Activated CD8-positive, alpha-beta T cell treated with anti-CD3 and anti-CD28 coated beads for 36 hours (primary cell): ENCODE measurements at regions of chr17 and their contacts with region 1.

Region 1: GRCh38 chr17:7862692-7863437 is 5.1 kb downstream of the CYB5D1 start:
- DNase-seq: peak; percentile 70
- ATAC-seq: no peak
- H3K4me3 Mint-ChIP-seq: no peak overlapping the region
- H3K27ac Mint-ChIP-seq: no peak overlapping the region
- H3K4me1 Mint-ChIP-seq: peaks cover 33% of the 10 kb centered on the region
- H3K27me3 Mint-ChIP-seq: no peaks in the 10 kb centered on the region
- CTCF ChIP-seq: peak; percentile 96

Region 2: DNA sequence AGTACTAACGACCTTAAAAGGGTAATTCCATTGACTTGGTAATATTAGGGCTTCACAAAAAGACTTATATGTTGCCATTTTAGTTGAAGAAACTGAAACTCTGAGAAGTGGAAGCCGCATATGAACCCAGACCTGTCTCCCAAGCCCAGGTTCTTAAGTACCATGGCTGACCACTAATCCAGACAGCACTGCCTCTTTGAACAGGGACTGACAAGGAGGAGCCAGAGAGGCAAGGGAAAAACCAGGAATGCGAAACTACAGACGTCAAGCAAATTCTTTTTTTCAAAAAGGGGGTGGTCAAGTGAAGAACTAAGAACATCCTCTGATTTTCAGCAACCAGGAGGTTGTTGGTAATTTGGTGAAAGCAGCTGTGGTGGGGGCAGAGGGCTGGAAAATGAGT is 10.2 kb after region 1 on chr17:
- CTCF ChIA-PET with region 1: interaction called, 42 read pairs
- POLR2A ChIA-PET with region 1: interaction called, 8 read pairs
- intact Hi-C with region 1: no loop called
- DNase-seq: no peak
- ATAC-seq: no peak
- H3K4me3 Mint-ChIP-seq: no peak overlapping the region
- H3K27ac Mint-ChIP-seq: no peak overlapping the region
- H3K4me1 Mint-ChIP-seq: peaks cover 14% of the 10 kb centered on the region
- H3K27me3 Mint-ChIP-seq: no peaks in the 10 kb centered on the region
- CTCF ChIP-seq: no peak

Region 3: GRCh38 chr17:7897773-7898172 is 34.9 kb after region 1 on chr17:
- CTCF ChIA-PET with region 1: interaction called, 5 read pairs
- POLR2A ChIA-PET with region 1: interaction called, 3 read pairs
- intact Hi-C with region 1: loop called (anchors 5 kb)
- DNase-seq: peak; percentile 25
- ATAC-seq: peak; percentile 58
- H3K4me3 Mint-ChIP-seq: no peak overlapping the region
- H3K27ac Mint-ChIP-seq: peak overlapping the region; percentile 58
- H3K4me1 Mint-ChIP-seq: peaks cover 11% of the 10 kb centered on the region
- H3K27me3 Mint-ChIP-seq: no peaks in the 10 kb centered on the region
- CTCF ChIP-seq: no peak